ENCODE measurements at regions of chr10 and their contacts with region 1.

Region 1: DNA sequence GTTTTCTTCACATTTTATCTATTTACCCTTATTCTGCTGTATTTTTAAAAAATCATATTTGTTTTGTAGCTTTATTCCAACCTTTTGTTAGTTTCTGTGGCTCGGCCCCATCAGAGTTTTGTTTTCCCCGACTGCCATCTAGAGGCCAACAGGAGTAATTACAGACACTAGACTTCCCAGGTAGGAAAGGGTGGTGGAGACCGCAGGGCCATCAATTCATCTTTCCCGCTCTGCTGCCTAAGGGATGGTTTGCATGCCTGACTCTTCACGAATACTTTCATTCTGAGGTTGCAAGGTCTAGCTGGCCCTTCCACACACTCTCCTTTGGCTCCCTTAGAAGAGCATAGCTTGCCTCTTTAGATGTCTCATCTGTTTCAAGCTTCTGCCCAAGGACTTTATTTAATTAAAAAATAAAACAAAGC is 38.3 kb downstream of the LYZL2 start:
- DNase-seq: no peak
- ATAC-seq: peak; percentile 41
- H3K4me3 ChIP-seq: no peak overlapping the region
- H3K27ac ChIP-seq: no peak overlapping the region
- H3K4me1 ChIP-seq: peaks cover 16% of the 10 kb centered on the region
- H3K27me3 ChIP-seq: no peaks in the 10 kb centered on the region
- CTCF ChIP-seq: peak; percentile 66 to 78 (median 72)
- EP300 ChIP-seq: no peak
- POLR2A ChIP-seq: no peak
- RAD21 ChIP-seq: peak; percentile 95

Region 2: DNA sequence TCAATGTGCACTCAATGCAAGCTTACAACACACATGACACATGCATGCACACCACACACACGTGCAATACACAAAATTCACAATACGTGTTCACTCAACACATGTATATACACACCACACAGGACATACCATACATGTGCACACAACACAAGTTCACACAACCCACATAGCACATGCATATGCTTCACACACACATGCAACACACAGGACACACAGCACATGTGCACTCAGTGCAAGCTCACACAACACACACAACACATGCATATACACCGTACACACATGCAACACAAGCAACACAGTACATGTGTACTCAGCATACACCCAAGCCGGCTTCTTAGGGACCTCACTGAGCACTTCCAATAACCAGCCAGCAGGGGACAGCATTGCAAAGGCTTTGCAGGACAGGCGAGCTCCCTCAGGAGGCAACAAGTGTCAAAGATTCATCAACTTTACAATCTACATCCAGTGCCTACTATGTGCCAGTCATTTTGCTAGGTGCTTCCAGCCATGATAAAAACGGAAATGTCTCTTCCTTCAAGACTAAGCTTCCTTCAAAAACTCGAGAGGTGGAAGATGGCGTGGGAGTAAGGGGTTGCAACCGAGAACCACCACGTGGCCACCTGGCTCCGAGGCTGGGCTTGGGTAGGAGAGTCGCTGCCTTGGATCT is 593.0 kb before region 1 on chr10:
- CTCF ChIA-PET with region 1: interaction called, 7 read pairs
- POLR2A ChIA-PET with region 1: no interaction called
- RAD21 ChIA-PET with region 1: interaction called, 15 read pairs
- SMC1A ChIA-PET with region 1: interaction called, 3 read pairs
- in situ Hi-C with region 1: loop called (anchors 10 kb)
- intact Hi-C with region 1: loop called (anchors 5 kb)
- DNase-seq: peak; percentile 30
- ATAC-seq: peak; percentile 93
- H3K4me3 ChIP-seq: no peak overlapping the region
- H3K27ac ChIP-seq: no peak overlapping the region
- H3K4me1 ChIP-seq: no peaks in the 10 kb centered on the region
- H3K27me3 ChIP-seq: peaks cover 0 to 1% of the 10 kb centered on the region in 2 experiments; a peak in 2 of 4 replicates
- CTCF ChIP-seq: peak; percentile 99 to 100 (median 99); a peak in 5 of 6 replicates
- EP300 ChIP-seq: no peak
- POLR2A ChIP-seq: no peak
- RAD21 ChIP-seq: peak; percentile 99

Region 3: GRCh38 chr10:30188101-30188500 is 403.2 kb before region 1 on chr10:
- CTCF ChIA-PET with region 1: no interaction called
- POLR2A ChIA-PET with region 1: no interaction called
- RAD21 ChIA-PET with region 1: no interaction called
- SMC1A ChIA-PET with region 1: no interaction called
- in situ Hi-C with region 1: no loop called
- intact Hi-C with region 1: no loop called
- DNase-seq: no peak
- ATAC-seq: no peak
- H3K4me3 ChIP-seq: no peak overlapping the region
- H3K27ac ChIP-seq: no peak overlapping the region
- H3K4me1 ChIP-seq: no peaks in the 10 kb centered on the region
- H3K27me3 ChIP-seq: no peaks in the 10 kb centered on the region
- CTCF ChIP-seq: no peak
- EP300 ChIP-seq: no peak
- POLR2A ChIP-seq: no peak
- RAD21 ChIP-seq: no peak

Region 4: GRCh38 chr10:30384701-30385201 is 206.5 kb before region 1 on chr10:
- CTCF ChIA-PET with region 1: interaction called, 221 read pairs
- POLR2A ChIA-PET with region 1: no interaction called
- RAD21 ChIA-PET with region 1: interaction called, 59 read pairs
- SMC1A ChIA-PET with region 1: interaction called, 14 read pairs
- in situ Hi-C with region 1: no loop called
- intact Hi-C with region 1: no loop called
- DNase-seq: no peak
- ATAC-seq: peak; percentile 89
- H3K4me3 ChIP-seq: no peak overlapping the region
- H3K27ac ChIP-seq: no peak overlapping the region
- H3K4me1 ChIP-seq: no peaks in the 10 kb centered on the region
- H3K27me3 ChIP-seq: no peaks in the 10 kb centered on the region; a peak in 2 of 4 replicates
- CTCF ChIP-seq: peak; percentile 43 to 54 (median 48); a peak in 5 of 6 replicates
- EP300 ChIP-seq: no peak
- POLR2A ChIP-seq: no peak
- RAD21 ChIP-seq: no peak; the same call in 1 of the 2 replicates

Region 5: DNA sequence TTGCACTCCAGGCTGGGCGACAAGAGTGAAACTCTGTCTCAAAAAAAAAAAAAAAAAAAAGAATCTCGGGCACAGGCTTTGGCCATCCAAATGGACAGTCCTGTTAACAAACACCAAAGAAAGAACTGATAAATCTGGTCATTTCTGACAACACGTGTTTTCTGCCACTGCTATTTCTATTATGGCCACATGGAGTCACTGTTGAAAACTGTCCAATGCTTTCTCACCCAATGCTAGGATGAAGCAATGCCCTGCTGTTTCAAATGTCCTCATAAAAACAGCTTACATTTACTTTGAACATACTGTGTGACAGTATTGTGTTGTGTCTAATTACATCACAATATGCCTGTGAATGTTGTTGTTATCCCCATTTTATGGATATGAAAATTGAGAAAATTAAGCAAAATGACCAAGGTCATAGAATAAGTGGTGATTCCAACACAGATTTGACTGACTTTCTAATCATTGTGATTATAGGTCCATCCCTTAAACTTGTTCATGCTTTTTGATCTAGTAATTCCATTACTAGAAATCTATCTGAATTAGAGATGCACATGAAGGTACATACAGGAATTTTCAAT is 177.2 kb before region 1 on chr10:
- CTCF ChIA-PET with region 1: interaction called, 27 read pairs
- POLR2A ChIA-PET with region 1: no interaction called
- RAD21 ChIA-PET with region 1: interaction called, 17 read pairs
- SMC1A ChIA-PET with region 1: interaction called, 32 read pairs
- in situ Hi-C with region 1: no loop called
- intact Hi-C with region 1: loop called (anchors 5 kb)
- DNase-seq: no peak
- ATAC-seq: peak; percentile 71
- H3K4me3 ChIP-seq: no peak overlapping the region
- H3K27ac ChIP-seq: no peak overlapping the region
- H3K4me1 ChIP-seq: peaks cover 28% of the 10 kb centered on the region
- H3K27me3 ChIP-seq: no peaks in the 10 kb centered on the region
- CTCF ChIP-seq: peak; percentile 78 to 87 (median 84)
- EP300 ChIP-seq: no peak
- POLR2A ChIP-seq: no peak
- RAD21 ChIP-seq: peak; percentile 97

Region 6: GRCh38 chr10:30493609-30494530 is 97.4 kb before region 1 on chr10:
- CTCF ChIA-PET with region 1: interaction called, 10 read pairs
- POLR2A ChIA-PET with region 1: no interaction called
- RAD21 ChIA-PET with region 1: interaction called, 4 read pairs
- SMC1A ChIA-PET with region 1: interaction called, 4 read pairs
- in situ Hi-C with region 1: no loop called
- intact Hi-C with region 1: no loop called
- DNase-seq: no peak
- ATAC-seq: peak; percentile 63
- H3K4me3 ChIP-seq: peak overlapping the region; percentile 40; the same call in 1 of the 2 replicates
- H3K27ac ChIP-seq: peak overlapping the region; percentile 87
- H3K4me1 ChIP-seq: peaks cover 88% of the 10 kb centered on the region
- H3K27me3 ChIP-seq: no peaks in the 10 kb centered on the region
- CTCF ChIP-seq: peak; percentile 20 to 45 (median 37); a peak in 5 of 6 replicates
- EP300 ChIP-seq: peak; percentile 35 to 80; a peak in 1 of 4 replicates
- POLR2A ChIP-seq: no peak
- RAD21 ChIP-seq: peak; percentile 37; the same call in 1 of the 2 replicates

Region 7: DNA sequence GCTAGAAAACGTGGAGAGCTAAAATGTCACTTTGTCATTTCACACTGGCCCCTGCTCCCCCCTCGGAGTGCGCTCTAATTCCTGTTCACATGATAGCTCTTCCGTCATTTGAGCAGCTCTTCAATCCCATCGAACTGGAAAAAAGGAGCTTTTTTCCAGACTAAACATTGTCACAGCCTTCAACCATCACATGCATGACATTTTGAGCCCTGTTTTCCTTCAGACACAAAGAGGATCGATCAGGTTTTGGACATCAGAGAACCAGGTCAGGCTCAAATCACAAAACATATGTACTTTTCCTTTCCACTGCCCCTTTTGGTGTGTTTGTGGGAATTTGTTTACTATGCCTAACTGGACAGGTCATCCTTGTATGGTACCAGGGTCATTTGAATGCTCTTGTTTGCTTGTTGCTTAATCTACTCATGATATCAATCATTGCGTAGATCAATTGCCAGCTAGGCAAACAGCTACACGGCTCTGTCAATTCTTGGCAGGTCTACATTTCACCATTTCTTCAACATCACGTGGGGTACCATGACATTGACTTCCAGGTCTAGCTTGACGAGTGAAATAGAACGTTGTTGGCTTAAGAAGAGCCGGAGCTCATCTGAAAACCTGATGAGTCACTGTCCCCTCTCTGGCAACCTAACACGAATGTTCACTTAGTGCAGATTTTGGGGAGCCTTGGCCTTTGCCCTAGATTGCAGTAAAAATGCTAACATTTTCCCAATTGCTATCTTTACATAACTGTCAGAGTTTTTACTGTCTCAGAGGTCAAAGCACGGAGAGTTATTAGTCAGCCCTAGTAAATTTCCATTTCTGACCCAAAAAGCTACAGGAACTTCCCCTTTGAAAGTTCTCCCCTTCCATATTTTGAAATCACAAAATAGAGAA is 49.0 kb before region 1 on chr10:
- CTCF ChIA-PET with region 1: interaction called, 40 read pairs
- POLR2A ChIA-PET with region 1: interaction called, 4 read pairs
- RAD21 ChIA-PET with region 1: interaction called, 21 read pairs
- SMC1A ChIA-PET with region 1: interaction called, 41 read pairs
- in situ Hi-C with region 1: no loop called
- intact Hi-C with region 1: loop called (anchors 2 kb)
- DNase-seq: no peak
- ATAC-seq: peak; percentile 68
- H3K4me3 ChIP-seq: peak overlapping the region; percentile 19; the same call in 1 of the 2 replicates
- H3K27ac ChIP-seq: peak overlapping the region; percentile 39
- H3K4me1 ChIP-seq: peaks cover 30% of the 10 kb centered on the region
- H3K27me3 ChIP-seq: no peaks in the 10 kb centered on the region
- CTCF ChIP-seq: no peak
- EP300 ChIP-seq: peak in 1 of 2 experiments; percentile 27; a peak in 1 of 4 replicates
- POLR2A ChIP-seq: no peak
- RAD21 ChIP-seq: no peak

Region 8: DNA sequence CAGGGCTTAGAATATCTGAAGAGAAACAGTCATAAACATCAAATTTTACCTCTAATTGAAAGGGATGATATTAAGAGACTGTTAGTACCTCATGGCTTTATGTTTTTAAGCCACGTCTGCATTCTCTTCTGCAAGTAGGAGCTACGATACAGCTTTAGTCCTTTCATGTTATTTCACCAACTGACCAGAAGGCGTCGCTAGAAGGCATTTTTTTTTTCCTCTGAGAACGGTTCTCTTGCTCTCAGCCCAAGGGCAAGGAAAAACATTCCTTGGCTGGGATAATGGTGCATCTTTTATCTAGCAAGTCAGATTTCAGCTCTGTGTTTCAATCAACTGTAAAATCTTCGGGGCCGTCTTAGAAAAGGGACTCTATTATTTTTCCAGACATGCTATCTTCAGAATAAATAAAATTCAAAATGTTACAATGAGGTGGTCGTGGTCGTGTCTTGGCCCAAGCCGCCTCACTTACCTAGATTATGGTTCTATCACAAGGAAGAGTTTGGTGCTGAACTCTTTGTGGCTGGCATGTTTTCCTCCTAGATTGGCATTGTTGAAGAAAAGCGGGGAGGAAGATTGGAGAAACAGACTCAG is 79.9 kb after region 1 on chr10:
- CTCF ChIA-PET with region 1: interaction called, 13 read pairs
- POLR2A ChIA-PET with region 1: no interaction called
- RAD21 ChIA-PET with region 1: no interaction called
- SMC1A ChIA-PET with region 1: no interaction called
- in situ Hi-C with region 1: no loop called
- intact Hi-C with region 1: no loop called
- DNase-seq: no peak
- ATAC-seq: peak; percentile 78
- H3K4me3 ChIP-seq: no peak overlapping the region
- H3K27ac ChIP-seq: no peak overlapping the region
- H3K4me1 ChIP-seq: peaks cover 10% of the 10 kb centered on the region
- H3K27me3 ChIP-seq: no peaks in the 10 kb centered on the region
- CTCF ChIP-seq: peak; percentile 69 to 79 (median 73)
- EP300 ChIP-seq: no peak
- POLR2A ChIP-seq: no peak
- RAD21 ChIP-seq: peak; percentile 73

Region 9: GRCh38 chr10:30963992-30964930 is 373.0 kb after region 1 on chr10:
- CTCF ChIA-PET with region 1: no interaction called
- POLR2A ChIA-PET with region 1: no interaction called
- RAD21 ChIA-PET with region 1: no interaction called
- SMC1A ChIA-PET with region 1: no interaction called
- in situ Hi-C with region 1: no loop called
- intact Hi-C with region 1: no loop called
- DNase-seq: no peak
- ATAC-seq: no peak
- H3K4me3 ChIP-seq: no peak overlapping the region
- H3K27ac ChIP-seq: no peak overlapping the region
- H3K4me1 ChIP-seq: no peaks in the 10 kb centered on the region
- H3K27me3 ChIP-seq: no peaks in the 10 kb centered on the region
- CTCF ChIP-seq: no peak
- EP300 ChIP-seq: no peak
- POLR2A ChIP-seq: no peak
- RAD21 ChIP-seq: no peak